ENCODE measurements at regions of chr20 and their contacts with region 1.

Region 1: DNA sequence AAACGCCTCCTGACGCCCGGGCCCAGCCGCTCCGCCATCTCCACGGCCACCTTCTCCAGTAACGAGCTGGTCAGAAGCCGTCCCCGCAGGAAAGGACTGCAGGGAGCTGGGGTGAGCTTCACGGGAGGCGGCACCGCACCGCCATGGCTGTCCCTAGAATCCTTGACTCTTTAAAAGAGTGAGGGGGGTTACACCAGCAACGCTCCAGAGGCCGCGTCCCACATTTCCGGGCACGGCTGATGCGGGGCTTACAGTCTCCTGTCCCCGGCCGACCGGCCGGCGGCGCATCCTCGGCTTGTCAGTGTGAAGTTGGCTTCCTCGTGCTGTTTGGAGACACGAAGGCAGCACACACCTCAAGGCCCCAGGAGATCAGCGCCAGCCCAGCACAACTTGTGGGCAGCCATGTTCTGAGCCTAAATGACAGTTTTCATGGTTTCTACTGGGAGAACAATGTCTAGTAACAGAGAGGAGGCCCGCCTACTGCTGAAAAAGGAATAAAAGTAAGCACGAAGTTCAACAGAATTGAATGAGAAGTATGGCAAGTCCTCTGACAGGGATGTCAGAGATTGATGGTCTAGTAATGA is 30.4 kb downstream of the SLC2A4RG start:
- DNase-seq: peak in 2 of 5 donors; percentile 11 to 61
- ATAC-seq: no peak
- H3K4me3 ChIP-seq: no peak overlapping the region
- H3K27ac ChIP-seq: no peak overlapping the region
- H3K4me1 ChIP-seq: peaks cover 0 to 25% (median 14%) of the 10 kb centered on the region in 12 donors
- H3K27me3 ChIP-seq: no peaks in the 10 kb centered on the region
- CTCF ChIP-seq: no peak
- POLR2A ChIP-seq: no peak

Region 2: GRCh38 chr20:63751471-63752271 is 18.3 kb before region 1 on chr20:
- intact Hi-C with region 1: loop called in 1 of 10 experiments (anchors 2 kb)
- DNase-seq: peak in 2 of 5 donors; percentile 25 to 57
- ATAC-seq: no peak
- H3K4me3 ChIP-seq: peak overlapping the region in 1 of 12 donors; percentile 23
- H3K27ac ChIP-seq: peak overlapping the region in 1 of 12 donors; percentile 78
- H3K4me1 ChIP-seq: peaks cover 0 to 11% (median 0%) of the 10 kb centered on the region in 12 donors
- H3K27me3 ChIP-seq: no peaks in the 10 kb centered on the region
- CTCF ChIP-seq: no peak
- POLR2A ChIP-seq: no peak

Region 3: DNA sequence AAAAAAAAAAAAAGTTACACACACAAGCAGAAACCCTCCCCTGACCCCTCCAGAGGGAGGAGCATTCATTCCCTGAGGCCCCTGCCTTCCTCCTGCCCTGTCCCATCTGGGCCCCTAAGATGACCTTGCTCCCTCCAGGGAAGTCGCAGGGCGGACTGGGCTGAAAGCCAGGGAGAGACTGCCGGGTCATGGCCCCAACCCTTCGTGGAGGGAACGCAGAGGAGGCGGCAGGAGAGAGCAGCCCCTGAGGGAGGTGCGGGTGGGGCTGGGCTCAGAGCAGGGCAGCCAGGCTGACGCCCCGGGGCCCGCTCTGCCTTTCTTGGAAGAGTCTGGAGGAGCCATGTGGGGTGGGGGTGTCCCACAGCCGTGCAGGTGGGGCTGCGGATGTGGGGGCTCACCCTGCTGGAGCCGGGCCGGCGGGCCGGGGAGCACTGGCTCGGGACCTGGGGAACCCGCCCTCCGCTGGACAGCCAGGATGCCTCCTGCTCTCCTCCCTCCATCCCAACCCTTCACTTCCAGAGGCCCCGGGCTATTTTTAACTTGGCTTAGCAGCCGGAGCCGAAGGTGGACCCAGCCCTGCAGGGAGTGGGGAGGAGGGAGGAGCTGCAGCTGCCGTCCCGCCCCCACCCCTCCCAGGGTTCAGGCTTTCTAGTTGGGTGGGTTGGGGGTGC is 76.3 kb after region 1 on chr20:
- intact Hi-C with region 1: no loop called
- DNase-seq: peak; percentile 85 to 91 (median 90)
- ATAC-seq: peak; percentile 79 to 87 (median 84)
- H3K4me3 ChIP-seq: peak overlapping the region in 11 of 12 donors; percentile 3 to 50 (median 43)
- H3K27ac ChIP-seq: peak overlapping the region; percentile 71 to 96 (median 84)
- H3K4me1 ChIP-seq: peaks cover 0 to 53% (median 44%) of the 10 kb centered on the region in 12 donors
- H3K27me3 ChIP-seq: peaks cover 0 to 33% (median 0%) of the 10 kb centered on the region in 9 donors
- CTCF ChIP-seq: peak in 3 of 12 donors; percentile 7 to 37 (median 20)
- POLR2A ChIP-seq: no peak